Left ventricle myocardium inferior (tissue), 1 donor: ENCODE measurements at regions of chr4 and their contacts with region 1.

Region 1: GRCh38 chr4:140359562-140360427 is 13.7 kb upstream of the SCOC start:
- DNase-seq: peak; percentile 53
- H3K4me3 ChIP-seq: no peak overlapping the region
- H3K27ac ChIP-seq: no peak overlapping the region
- H3K4me1 ChIP-seq: no peaks in the 10 kb centered on the region
- H3K27me3 ChIP-seq: no peaks in the 10 kb centered on the region
- CTCF ChIP-seq: peak; percentile 84

Region 2: DNA sequence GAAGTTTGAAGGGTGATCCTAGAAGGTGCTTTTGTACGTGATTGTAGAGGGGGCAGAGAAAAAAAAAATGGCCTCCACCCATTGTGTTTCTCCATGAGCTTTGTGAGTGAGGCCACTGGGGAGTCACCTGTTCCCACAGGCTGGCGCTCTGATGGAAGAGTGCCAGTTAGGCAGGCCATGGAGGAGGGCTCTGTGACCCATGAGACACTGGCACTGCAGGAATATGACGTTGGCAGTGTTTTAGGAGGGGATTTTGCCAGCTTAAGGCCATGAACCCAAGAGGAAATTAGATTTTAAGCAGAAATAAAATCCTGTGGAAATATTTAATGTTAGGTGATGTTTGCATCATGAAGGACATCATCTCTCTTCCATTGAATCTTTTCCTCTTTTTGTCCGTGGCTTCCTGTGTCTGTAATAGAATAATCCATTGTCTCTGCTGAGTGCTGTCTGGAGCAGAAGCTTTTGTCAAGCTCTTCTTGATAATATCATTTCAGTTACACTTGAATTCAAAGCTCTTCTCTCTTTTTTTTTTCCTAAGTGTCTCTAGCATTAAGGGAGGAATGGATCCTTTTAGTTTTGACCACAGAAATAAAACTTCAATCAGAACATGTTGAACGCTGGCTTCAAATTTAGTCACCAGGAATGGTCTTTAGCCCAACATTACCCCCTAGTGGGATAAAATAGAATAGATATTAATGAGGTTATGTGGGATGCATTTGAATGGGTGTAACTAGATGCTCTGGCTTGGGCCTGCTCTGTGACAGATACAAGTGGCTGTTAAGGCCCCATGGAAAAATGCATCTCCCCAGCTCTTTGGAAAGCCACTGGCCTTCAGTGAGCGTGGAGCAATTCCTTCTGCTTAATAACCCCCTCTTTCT is 250.0 kb after region 1 on chr4:
- intact Hi-C with region 1: loop called (anchors 5 kb)
- DNase-seq: no peak
- H3K4me3 ChIP-seq: no peak overlapping the region
- H3K27ac ChIP-seq: peak overlapping the region; percentile 51
- H3K4me1 ChIP-seq: peaks cover 9% of the 10 kb centered on the region
- H3K27me3 ChIP-seq: no peaks in the 10 kb centered on the region
- CTCF ChIP-seq: peak; percentile 72